ENCODE measurements at regions of chr10 and their contacts with region 1.

Region 1: GRCh38 chr10:28381903-28382347 is 79.1 kb upstream of the MPP7 start:
- DNase-seq: peak; percentile 83
- H3K4me3 ChIP-seq: no peak overlapping the region
- H3K27ac ChIP-seq: no peak overlapping the region
- H3K4me1 ChIP-seq: no peaks in the 10 kb centered on the region
- H3K27me3 ChIP-seq: no peaks in the 10 kb centered on the region
- CTCF ChIP-seq: peak; percentile 78 to 85
- POLR2A ChIP-seq: no peak

Region 2: DNA sequence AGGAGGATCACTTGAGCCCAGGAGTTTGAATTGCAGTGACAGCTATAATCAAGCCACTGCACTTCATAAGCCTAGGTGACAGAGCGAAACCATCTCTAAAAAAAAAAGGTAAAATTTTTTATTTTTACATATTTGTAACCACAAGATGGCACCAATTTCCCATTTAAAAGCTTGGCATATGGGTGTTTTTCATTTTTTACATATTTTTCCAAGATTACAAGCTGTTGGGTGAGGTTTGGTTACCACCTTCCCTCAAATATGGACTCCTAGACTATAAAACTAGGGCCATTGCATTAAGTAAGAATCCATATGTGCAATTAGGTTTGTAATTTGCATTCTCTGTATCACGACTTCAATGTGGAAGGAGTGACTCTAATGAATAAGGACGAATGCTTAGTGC is 1012.0 kb before region 1 on chr10:
- CTCF ChIA-PET with region 1: interaction called, 20 read pairs
- POLR2A ChIA-PET with region 1: no interaction called
- dilution Hi-C with region 1: no loop called
- intact Hi-C with region 1: no loop called
- DNase-seq: peak; percentile 16
- H3K4me3 ChIP-seq: no peak overlapping the region
- H3K27ac ChIP-seq: no peak overlapping the region
- H3K4me1 ChIP-seq: no peaks in the 10 kb centered on the region
- H3K27me3 ChIP-seq: peaks cover 0 to 3% of the 10 kb centered on the region in 2 experiments
- CTCF ChIP-seq: no peak
- POLR2A ChIP-seq: no peak

Region 3: GRCh38 chr10:27558612-27559020 is 823.3 kb before region 1 on chr10:
- CTCF ChIA-PET with region 1: interaction called, 3 read pairs
- POLR2A ChIA-PET with region 1: no interaction called
- dilution Hi-C with region 1: no loop called
- intact Hi-C with region 1: loop called (anchors 5 kb)
- DNase-seq: peak; percentile 48
- H3K4me3 ChIP-seq: no peak overlapping the region
- H3K27ac ChIP-seq: no peak overlapping the region
- H3K4me1 ChIP-seq: no peaks in the 10 kb centered on the region
- H3K27me3 ChIP-seq: no peaks in the 10 kb centered on the region
- CTCF ChIP-seq: peak; percentile 50 to 53
- POLR2A ChIP-seq: no peak

Region 4: GRCh38 chr10:27783660-27784059 is 598.3 kb before region 1 on chr10:
- CTCF ChIA-PET with region 1: interaction called, 4 read pairs
- POLR2A ChIA-PET with region 1: no interaction called
- dilution Hi-C with region 1: no loop called
- intact Hi-C with region 1: loop called (anchors 5 kb)
- DNase-seq: peak; percentile 64
- H3K4me3 ChIP-seq: no peak overlapping the region
- H3K27ac ChIP-seq: no peak overlapping the region
- H3K4me1 ChIP-seq: no peaks in the 10 kb centered on the region
- H3K27me3 ChIP-seq: peaks cover 3 to 5% of the 10 kb centered on the region in 2 experiments
- CTCF ChIP-seq: peak; percentile 54 to 68
- POLR2A ChIP-seq: no peak

Region 5: DNA sequence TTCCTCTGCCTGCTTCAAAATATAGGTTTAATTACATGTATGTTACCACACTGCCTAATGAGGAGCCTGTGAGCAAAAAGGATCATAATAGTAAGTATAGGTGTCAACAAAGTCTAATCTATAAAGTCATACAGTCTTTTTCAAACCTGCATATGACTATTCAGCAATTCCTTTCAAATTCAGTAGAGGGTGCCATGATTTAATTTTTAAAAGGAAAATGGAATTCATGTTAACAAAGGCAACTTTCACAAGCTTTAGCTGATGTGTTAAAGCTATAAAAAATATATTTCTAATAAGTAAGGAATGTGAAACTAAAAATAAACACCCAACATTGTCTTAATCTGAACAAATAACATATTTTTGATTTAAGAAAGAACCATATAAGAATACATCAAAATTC is 131.1 kb before region 1 on chr10:
- CTCF ChIA-PET with region 1: interaction called, 83 read pairs
- POLR2A ChIA-PET with region 1: no interaction called
- dilution Hi-C with region 1: no loop called
- intact Hi-C with region 1: loop called (anchors 1 kb)
- DNase-seq: peak; percentile 22
- H3K4me3 ChIP-seq: no peak overlapping the region
- H3K27ac ChIP-seq: no peak overlapping the region
- H3K4me1 ChIP-seq: no peaks in the 10 kb centered on the region
- H3K27me3 ChIP-seq: peaks cover 7% of the 10 kb centered on the region in 2 experiments
- CTCF ChIP-seq: peak; percentile 15 to 19
- POLR2A ChIP-seq: no peak

Region 6: GRCh38 chr10:28370107-28370835 is 11.7 kb before region 1 on chr10:
- CTCF ChIA-PET with region 1: interaction called, 13 read pairs
- POLR2A ChIA-PET with region 1: no interaction called
- dilution Hi-C with region 1: no loop called
- intact Hi-C with region 1: no loop called
- DNase-seq: no peak
- H3K4me3 ChIP-seq: no peak overlapping the region
- H3K27ac ChIP-seq: no peak overlapping the region
- H3K4me1 ChIP-seq: no peaks in the 10 kb centered on the region
- H3K27me3 ChIP-seq: peaks cover 0 to 2% of the 10 kb centered on the region in 2 experiments
- CTCF ChIP-seq: no peak
- POLR2A ChIP-seq: no peak

Region 7: DNA sequence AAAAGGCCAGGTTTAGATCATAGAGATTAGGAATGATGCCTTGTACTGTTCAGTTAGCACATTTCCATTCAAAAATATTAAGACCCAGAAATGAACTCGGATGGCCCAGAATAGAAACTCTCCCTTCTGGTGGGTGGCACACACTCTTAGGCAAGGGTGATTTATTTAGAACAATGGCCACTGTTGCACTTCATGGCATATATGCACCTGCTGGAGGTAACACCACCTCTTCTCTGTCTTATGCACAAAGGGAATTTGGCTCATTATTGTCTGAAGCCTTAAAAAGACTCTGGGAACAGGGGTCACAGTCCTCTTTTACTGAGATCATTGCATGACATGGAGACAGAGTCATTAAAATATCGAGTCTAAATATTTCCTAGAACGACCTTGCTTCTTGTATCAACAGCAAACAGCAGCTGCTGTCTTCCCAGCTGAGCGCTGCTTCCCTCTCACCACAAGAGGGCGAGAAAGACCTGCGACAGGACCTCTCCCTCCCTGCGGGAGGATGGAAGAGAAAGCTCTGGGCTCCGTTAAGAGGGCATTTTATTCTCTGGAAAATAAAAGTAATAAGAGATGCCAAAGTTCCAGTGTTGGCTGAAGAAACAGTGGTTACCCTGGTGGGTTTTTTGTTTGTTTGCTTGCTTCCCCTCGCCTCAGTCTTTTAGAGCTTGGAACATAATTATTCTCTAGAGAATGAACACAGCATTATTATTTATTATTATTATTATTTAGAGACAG is 281.8 kb after region 1 on chr10:
- CTCF ChIA-PET with region 1: no interaction called
- POLR2A ChIA-PET with region 1: no interaction called
- dilution Hi-C with region 1: no loop called
- intact Hi-C with region 1: no loop called
- DNase-seq: peak; percentile 80
- H3K4me3 ChIP-seq: no peak overlapping the region
- H3K27ac ChIP-seq: no peak overlapping the region
- H3K4me1 ChIP-seq: no peaks in the 10 kb centered on the region
- H3K27me3 ChIP-seq: peaks cover 8 to 12% of the 10 kb centered on the region in 2 experiments
- CTCF ChIP-seq: peak; percentile 95 to 96
- POLR2A ChIP-seq: no peak

Measured in endothelial cell of umbilical vein (primary cell).